Tibial artery (tissue), 4 donors: ENCODE measurements at regions of chr1 and their contacts with region 1.

Region 1: GRCh38 chr1:211145944-211146343 is 12.0 kb upstream of the KCNH1 start:
- DNase-seq: no peak
- H3K4me3 ChIP-seq: no peak overlapping the region
- H3K27ac ChIP-seq: no peak overlapping the region
- H3K4me1 ChIP-seq: no peaks in the 10 kb centered on the region
- H3K27me3 ChIP-seq: peaks cover 0 to 5% of the 10 kb centered on the region in 2 donors
- CTCF ChIP-seq: no peak

Region 2: DNA sequence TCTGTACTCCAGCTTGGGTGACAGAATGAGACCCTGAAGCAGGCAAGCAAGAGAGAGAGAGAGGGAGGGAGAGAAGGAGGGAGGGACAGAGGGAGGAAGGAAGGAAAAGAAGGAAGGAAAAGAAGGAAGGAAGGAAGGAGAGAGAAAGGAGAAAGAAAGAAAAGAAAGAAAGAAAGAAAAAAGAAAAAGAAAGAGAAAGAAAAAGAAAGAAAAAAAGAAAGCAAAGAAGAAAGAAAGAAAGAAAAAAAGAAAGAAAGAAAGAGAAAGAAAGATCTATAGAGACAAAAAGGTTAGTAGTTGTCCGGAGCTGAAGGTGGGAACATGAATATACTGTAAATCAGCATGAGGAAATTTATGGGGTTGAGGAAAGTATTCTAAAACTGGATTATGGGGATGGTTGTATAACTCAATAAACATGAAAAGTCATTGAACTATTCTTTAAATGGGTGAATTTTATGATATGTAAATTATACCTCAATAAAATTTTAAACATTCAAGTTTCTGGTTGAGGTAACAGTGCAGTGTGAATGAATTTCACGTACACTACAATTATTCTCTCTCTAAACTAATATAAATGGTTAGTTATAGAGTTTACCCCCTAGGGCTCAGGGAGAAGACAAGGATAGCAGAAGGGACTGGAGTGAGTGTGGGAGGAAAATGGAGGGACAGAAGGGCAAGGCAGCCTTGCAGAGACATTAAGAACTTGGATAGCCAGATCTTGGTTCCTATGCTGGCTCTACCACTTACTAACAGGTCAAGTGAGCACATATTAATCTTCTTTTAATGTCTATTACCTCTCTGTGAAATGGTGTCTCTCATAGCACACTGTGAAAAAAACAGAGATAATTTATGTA is 938.1 kb before region 1 on chr1:
- intact Hi-C with region 1: loop called (anchors 5 kb)
- DNase-seq: no peak
- H3K4me3 ChIP-seq: no peak overlapping the region
- H3K27ac ChIP-seq: no peak overlapping the region
- H3K4me1 ChIP-seq: no peaks in the 10 kb centered on the region
- H3K27me3 ChIP-seq: no peaks in the 10 kb centered on the region
- CTCF ChIP-seq: no peak

Region 3: DNA sequence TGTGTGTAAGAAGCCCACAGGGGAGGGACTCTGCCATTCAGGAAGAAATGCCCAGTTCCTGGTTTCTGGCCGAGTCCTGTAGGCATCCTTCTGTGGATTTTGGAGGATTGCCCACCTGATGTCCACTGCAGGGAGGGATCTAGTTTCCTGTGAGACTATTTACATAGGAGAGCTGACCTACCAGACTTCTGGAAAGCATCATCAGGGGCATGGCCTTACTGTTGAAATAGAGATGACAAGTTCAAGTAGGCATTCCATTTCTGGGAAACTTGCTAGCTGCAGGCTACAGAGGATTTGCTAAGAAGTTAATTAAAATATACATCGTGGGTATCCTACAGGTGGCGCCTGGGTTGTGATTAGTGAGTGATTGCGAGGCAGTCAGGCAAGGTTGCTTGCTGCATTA is 668.6 kb before region 1 on chr1:
- intact Hi-C with region 1: no loop called
- DNase-seq: no peak
- H3K4me3 ChIP-seq: no peak overlapping the region
- H3K27ac ChIP-seq: no peak overlapping the region
- H3K4me1 ChIP-seq: no peaks in the 10 kb centered on the region
- H3K27me3 ChIP-seq: no peaks in the 10 kb centered on the region
- CTCF ChIP-seq: no peak

Region 4: GRCh38 chr1:211099393-211099792 is 46.6 kb before region 1 on chr1:
- intact Hi-C with region 1: no loop called
- DNase-seq: no peak
- H3K4me3 ChIP-seq: no peak overlapping the region
- H3K27ac ChIP-seq: no peak overlapping the region
- H3K4me1 ChIP-seq: no peaks in the 10 kb centered on the region
- H3K27me3 ChIP-seq: peaks cover 0 to 4% of the 10 kb centered on the region in 2 donors
- CTCF ChIP-seq: no peak

Region 5: GRCh38 chr1:211133836-211134669 is 11.9 kb before region 1 on chr1 and contains the start of gene KCNH1:
- intact Hi-C with region 1: no loop called
- DNase-seq: peak; percentile 66 to 74
- H3K4me3 ChIP-seq: peak within 1 kb of the TSS; percentile 39 to 54
- H3K27ac ChIP-seq: no peak within 1 kb of the TSS
- H3K4me1 ChIP-seq: peaks cover 0 to 22% (median 16%) of the 10 kb centered on the region in 4 donors
- H3K27me3 ChIP-seq: peaks cover 0 to 28% of the 10 kb centered on the region in 2 donors
- CTCF ChIP-seq: peak; percentile 73 to 77